Activated CD4-positive, alpha-beta memory T cell treated with anti-CD3 and anti-CD28 coated beads, Interleukin-2, amount 10 ng/mL, durations not matched to agents 7 days and 5 days (primary cell): ENCODE measurements at regions of chr10 and their contacts with region 1.

Region 1: DNA sequence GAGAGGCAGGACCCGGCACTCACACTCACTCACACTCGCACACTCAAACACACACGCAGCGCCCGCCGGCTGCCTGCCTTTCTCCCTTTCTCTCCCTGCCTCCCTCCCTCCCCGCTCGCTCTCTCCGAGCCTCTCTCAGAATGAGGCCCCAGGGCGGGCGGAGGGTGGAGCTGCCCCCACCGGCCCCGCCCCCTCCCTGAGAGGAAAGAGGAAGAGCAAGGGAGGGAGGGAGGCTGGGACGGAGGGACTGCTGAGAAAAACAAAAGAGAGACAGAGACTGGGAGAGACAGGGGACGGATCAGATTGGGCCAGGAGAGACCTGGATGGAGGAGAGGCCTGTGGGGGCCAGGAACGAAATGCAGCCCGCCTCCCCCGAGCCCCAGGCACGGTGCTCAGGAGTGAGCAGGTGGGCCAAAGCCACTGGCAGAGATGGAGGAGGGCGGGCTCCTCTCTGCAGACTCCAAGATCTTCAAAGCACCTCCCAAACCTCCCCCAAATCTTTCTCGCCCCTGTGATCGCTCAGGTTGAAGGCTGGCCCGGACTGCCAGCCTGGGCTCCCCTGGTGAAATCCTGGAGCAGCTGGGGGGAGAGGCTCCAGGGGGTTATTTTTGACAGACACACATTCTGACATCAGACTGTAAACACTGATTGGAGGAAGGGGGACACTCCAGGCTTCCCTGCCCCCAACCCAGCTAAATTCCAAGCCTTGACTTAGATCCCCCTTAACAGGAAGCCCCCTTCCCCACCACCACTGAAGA is 5.1 kb downstream of the LDB1 start:
- DNase-seq: peak; percentile 91
- H3K4me3 Mint-ChIP-seq: peak overlapping the region; percentile 76
- H3K27ac Mint-ChIP-seq: peak overlapping the region; percentile 91
- H3K4me1 Mint-ChIP-seq: peaks cover 63% of the 10 kb centered on the region
- H3K27me3 Mint-ChIP-seq: no peaks in the 10 kb centered on the region

Region 2: GRCh38 chr10:102101152-102101551 is 13.9 kb before region 1 on chr10:
- CTCF ChIA-PET with region 1: interaction called, 5 read pairs
- POLR2A ChIA-PET with region 1: interaction called, 19 read pairs
- DNase-seq: no peak
- H3K4me3 Mint-ChIP-seq: no peak overlapping the region
- H3K27ac Mint-ChIP-seq: no peak overlapping the region
- H3K4me1 Mint-ChIP-seq: peaks cover 18% of the 10 kb centered on the region
- H3K27me3 Mint-ChIP-seq: no peaks in the 10 kb centered on the region

Region 3: GRCh38 chr10:102132563-102133372 is 17.7 kb after region 1 on chr10 and contains the start of gene PPRC1:
- CTCF ChIA-PET with region 1: interaction called, 12 read pairs
- POLR2A ChIA-PET with region 1: interaction called, 18 read pairs
- DNase-seq: peak; percentile 99
- H3K4me3 Mint-ChIP-seq: peak within 1 kb of the TSS; percentile 98
- H3K27ac Mint-ChIP-seq: peak within 1 kb of the TSS; percentile 96
- H3K4me1 Mint-ChIP-seq: peaks cover 46% of the 10 kb centered on the region
- H3K27me3 Mint-ChIP-seq: no peaks in the 10 kb centered on the region
- total RNA-seq, gene PPRC1: 32.5 to 35.8 TPM

Region 4: GRCh38 chr10:102151774-102152544 is 36.9 kb after region 1 on chr10 and contains the start of gene NOLC1:
- CTCF ChIA-PET with region 1: interaction called, 4 read pairs
- POLR2A ChIA-PET with region 1: interaction called, 15 read pairs
- DNase-seq: peak; percentile 100
- H3K4me3 Mint-ChIP-seq: peak within 1 kb of the TSS; percentile 90
- H3K27ac Mint-ChIP-seq: peak within 1 kb of the TSS; percentile 87
- H3K4me1 Mint-ChIP-seq: peaks cover 55% of the 10 kb centered on the region
- H3K27me3 Mint-ChIP-seq: no peaks in the 10 kb centered on the region
- total RNA-seq, gene NOLC1: 57.0 to 64.3 TPM